Dorsolateral prefrontal cortex (tissue), 120 donors: ENCODE measurements at regions of chr1 and their contacts with region 1.

Region 1: DNA sequence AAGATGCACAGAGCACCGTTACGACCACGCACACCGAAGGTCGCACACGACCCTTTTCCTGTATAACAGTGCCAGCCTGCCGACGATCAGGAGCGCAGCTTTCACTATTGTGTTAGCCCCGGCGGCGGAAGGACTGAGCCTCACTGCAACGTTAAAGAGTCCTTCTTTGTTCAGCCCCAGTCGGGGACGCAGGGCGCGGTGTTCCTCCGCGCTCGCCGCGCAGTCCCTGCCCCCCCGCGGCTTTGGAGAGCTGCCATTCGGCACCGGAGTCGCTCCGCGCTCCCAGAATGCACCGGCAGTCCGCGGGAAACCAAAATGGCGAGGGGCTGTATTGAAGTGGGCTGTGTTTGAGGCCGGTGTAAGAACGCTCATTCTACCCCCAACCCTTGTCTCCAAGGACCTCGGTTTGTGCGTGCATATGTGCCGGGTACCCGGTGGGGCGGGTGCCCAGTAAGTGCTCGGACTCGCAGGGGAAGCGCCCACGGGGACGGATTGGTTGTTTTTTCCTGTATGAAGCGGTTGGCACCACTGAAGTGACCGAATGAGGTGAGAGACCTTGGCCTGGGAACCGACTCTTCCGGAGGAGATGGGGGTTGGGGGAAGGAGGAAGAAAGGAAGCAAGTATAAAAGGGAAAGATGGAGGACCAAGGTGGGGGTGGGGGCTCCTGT is at the start of gene MTF2:
- DNase-seq: peak; percentile 89 to 96 (median 94)
- H3K4me3 ChIP-seq: peak within 1 kb of the TSS; percentile 58 to 99 (median 86)
- H3K27ac ChIP-seq: peak within 1 kb of the TSS; percentile 73 to 97 (median 89)
- H3K27me3 ChIP-seq: no peaks in the 10 kb centered on the region
- CTCF ChIP-seq: peak in 49 of 56 donors; percentile 5 to 60 (median 38)
- total RNA-seq, gene MTF2: 21.2 to 53.7 (median 32.4) TPM

Region 2: DNA sequence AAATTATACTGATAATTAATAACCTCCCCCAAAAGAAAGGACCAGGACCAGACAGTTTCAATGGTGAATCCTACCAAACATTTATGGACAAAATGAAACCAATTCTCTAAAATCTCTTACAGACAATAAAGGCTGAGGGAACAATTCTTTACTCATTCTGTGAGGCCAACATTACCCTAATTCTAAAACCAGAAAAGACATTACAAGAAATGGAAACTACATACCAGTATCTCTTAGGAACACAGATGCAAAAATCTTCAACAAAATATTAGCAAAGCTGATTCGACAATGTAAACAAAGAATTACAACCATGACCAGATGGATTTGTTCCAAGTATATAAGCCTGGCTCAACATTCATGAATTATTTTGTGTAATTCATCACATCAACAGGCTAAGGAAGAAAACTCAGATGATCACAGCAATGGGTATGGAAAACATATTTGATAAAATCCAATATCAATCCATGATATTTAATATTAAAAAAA is 92.5 kb after region 1 on chr1:
- intact Hi-C with region 1: loop called in 1 of 2 experiments (anchors 5 kb)
- DNase-seq: no peak
- H3K4me3 ChIP-seq: no peak overlapping the region
- H3K27ac ChIP-seq: no peak overlapping the region
- H3K27me3 ChIP-seq: no peaks in the 10 kb centered on the region
- CTCF ChIP-seq: no peak

Region 3: GRCh38 chr1:93179886-93180722 is 101.0 kb after region 1 on chr1 and contains the start of gene TMED5:
- intact Hi-C with region 1: loop called (anchors 1 to 2 kb)
- DNase-seq: peak; percentile 87 to 99 (median 96)
- H3K4me3 ChIP-seq: peak within 1 kb of the TSS; percentile 50 to 99 (median 90)
- H3K27ac ChIP-seq: peak within 1 kb of the TSS; percentile 73 to 100 (median 97)
- H3K27me3 ChIP-seq: no peaks in the 10 kb centered on the region
- CTCF ChIP-seq: peak in 49 of 56 donors; percentile 4 to 68 (median 41)
- total RNA-seq, gene TMED5: 21.5 to 56.2 (median 36.2) TPM

Region 4: DNA sequence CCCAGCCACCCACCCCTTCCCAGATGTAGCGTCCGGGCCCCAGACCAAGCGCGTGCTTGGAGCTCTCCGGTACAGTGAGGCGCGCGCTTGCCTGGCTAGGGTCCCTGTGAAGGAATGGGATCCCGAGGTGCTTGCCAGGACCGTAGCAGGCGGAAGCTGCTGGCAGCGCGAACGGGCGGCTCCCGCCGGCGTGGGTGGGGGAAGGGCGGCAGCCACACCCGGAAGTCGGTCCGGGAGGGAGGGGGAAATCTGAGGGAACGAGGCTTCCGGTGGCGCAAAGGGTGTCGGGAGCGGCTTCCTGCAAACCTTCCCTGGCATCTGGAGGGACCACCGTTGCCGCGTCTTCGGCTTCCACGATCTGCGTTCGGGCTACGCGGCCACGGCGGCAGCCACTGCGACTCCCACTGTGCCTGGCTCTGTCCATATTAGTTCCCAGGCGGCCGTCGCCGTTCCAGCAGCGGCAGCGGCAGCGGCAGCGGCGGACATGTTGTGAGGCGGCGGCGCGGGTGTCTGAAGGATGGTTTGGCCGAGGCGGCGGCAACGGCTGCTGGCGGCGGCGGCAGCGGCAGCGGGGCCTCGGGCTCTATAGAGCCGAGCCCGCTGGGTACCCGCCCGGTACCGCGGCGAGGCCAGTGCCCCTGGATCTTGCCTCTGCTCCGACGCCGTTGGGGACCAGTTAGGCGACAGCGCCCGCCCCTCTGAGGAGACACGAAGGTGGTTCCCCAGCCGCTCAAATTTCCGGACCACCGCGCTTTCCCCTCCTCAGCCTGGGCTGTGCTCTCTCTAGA is 266.7 kb after region 1 on chr1 and contains the start of gene DR1:
- intact Hi-C with region 1: loop called (anchors 2 to 5 kb)
- DNase-seq: peak; percentile 84 to 94 (median 92)
- H3K4me3 ChIP-seq: peak within 1 kb of the TSS; percentile 64 to 100 (median 91)
- H3K27ac ChIP-seq: peak within 1 kb of the TSS; percentile 70 to 98 (median 94)
- H3K27me3 ChIP-seq: no peaks in the 10 kb centered on the region
- CTCF ChIP-seq: peak in 19 of 56 donors; percentile 8 to 49 (median 26)
- total RNA-seq, gene DR1: 27.3 to 45.6 (median 35.4) TPM